Aorta (tissue), 5 donors: ENCODE measurements at regions of chr5 and their contacts with region 1.

Region 1: GRCh38 chr5:96331210-96331609 is 101.8 kb downstream of the PCSK1 start:
- DNase-seq: no peak
- ATAC-seq: no peak
- H3K4me3 ChIP-seq: no peak overlapping the region
- H3K27ac ChIP-seq: no peak overlapping the region
- H3K4me1 ChIP-seq: peaks cover 2 to 13% of the 10 kb centered on the region in 2 donors
- H3K27me3 ChIP-seq: no peaks in the 10 kb centered on the region

Region 2: DNA sequence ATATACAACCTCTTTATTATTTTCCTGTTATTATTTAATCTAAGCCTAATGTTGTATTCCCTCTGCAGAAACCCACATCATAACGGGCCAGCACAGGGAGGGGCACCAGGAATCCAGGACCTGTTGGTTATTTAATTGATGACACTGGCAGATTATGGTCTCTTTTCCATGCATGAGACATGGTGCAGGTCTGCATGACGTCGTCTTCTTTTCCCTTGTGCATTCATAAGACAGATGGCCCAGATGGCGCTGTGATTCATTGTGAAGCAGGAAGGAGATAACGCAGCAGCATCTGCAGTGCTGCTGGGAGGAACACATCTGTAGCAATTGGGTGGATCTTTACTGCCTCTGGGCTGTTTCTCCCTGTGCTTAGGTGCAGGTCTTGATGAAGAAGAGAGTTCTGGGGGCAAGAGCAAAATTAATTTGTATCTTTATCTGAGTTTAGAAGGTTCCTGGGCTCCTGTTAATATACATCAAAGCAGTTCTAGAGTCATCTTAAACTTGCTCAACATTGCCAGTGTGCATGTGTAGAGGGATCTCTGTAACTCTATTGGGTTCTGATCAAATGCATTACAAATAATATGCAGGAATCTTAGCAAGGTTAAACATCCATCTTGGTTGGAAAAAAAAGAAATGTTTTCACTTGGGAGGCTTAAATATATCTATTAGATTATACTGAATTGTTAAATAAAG is 74.3 kb before region 1 on chr5:
- intact Hi-C with region 1: loop called (anchors 2 to 5 kb)
- DNase-seq: no peak
- ATAC-seq: no peak
- H3K4me3 ChIP-seq: no peak overlapping the region
- H3K27ac ChIP-seq: peak overlapping the region in 1 of 2 donors; percentile 71
- H3K4me1 ChIP-seq: peaks cover 5 to 12% of the 10 kb centered on the region in 2 donors
- H3K27me3 ChIP-seq: no peaks in the 10 kb centered on the region

Region 3: DNA sequence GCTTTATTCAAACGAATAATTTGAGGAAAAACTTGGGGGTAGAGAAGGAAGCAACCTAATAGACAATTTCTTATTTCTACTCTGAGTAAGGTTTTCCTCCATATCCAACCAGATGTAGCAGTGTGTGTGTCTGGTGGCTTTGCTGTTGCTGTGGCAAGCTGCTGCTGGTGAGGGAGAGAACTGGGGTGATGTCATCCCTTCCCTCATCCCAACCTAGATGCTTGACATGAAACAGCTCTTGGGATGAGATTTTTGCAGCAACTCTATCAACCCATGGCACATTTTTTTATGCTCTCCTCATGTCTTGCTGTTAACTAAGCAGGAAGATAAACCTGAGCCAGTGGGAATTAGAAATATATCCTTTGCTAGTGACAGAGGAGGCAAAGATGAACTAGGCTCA is 33.9 kb before region 1 on chr5:
- intact Hi-C with region 1: loop called in 1 of 2 experiments (anchors 5 kb)
- DNase-seq: no peak
- ATAC-seq: peak; percentile 73
- H3K4me3 ChIP-seq: no peak overlapping the region
- H3K27ac ChIP-seq: peak overlapping the region; percentile 51 to 57
- H3K4me1 ChIP-seq: peaks cover 0 to 3% of the 10 kb centered on the region in 2 donors
- H3K27me3 ChIP-seq: no peaks in the 10 kb centered on the region